Posterior vena cava (tissue), 2 donors: ENCODE measurements at regions of chr9 and their contacts with region 1.

Region 1: GRCh38 chr9:118882684-118883083 is 486.6 kb downstream of the BRINP1 start:
- DNase-seq: no peak

Region 2: DNA sequence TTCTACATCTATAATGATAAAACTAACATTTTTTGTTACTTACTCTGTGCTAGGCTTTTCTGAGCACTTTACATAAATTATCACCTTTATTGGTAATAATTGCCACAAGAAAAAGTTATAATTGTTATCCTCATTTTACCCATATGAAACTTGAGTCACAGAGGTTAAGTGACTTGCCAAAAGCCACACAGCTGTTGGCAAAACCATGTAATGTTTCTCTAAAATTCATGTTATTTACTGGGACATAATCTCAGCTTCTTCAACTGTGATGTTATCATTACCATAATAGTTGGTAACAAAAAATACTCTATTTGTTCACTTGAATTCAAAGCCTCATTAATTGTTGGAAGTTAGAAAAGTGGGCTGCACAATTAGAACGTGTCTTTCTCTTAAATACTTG is 49.3 kb after region 1 on chr9:
- intact Hi-C with region 1: loop called in 1 of 2 experiments (anchors 2 kb)
- DNase-seq: no peak